Dendritic cell treated with granulocyte-macrophage colony-stimulating factor and Interleukin-4, amounts not matched to agents 40 ng/mL and 50 ng/mL, for 4 days (primary cell): ENCODE measurements at regions of chr10 and their contacts with region 1.

Region 1: DNA sequence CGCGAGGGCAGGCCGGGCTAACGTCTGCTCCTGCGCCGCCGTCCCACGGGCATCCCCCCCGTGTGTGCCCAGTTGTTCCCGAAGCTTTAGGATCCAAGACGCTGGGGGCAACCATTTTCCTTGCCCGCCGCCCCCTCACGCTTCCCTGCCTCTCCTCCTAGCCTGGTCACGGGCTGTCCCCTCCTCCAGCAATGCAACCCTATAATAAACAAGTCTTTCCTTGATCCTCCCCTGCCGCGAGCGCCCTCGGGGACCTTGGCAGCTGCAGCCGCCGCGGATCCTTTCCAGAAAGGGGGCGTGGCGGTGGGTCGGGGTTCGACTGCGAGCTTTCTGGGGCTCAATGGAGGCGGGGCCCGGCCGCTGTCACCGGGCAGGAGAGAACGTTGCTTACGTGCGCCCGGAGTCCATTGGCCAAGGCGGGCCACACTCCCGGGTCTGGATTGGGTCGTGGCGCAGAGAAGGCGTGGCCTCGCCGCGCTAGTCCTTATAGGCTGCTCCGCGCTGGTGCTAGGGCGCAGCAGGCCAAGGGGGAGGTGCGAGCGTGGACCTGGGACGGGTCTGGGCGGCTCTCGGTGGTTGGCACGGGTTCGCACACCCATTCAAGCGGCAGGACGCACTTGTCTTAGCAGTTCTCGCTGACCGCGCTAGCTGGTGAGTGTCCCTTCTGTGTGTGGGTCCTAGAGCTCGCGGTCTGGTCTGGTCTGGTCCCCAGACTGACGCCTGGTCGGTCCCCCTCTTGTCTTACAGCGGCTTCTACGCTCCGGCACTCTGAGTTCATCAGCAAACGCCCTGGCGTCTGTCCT is at the start of gene DDIT4:
- H3K4me3 Mint-ChIP-seq: peak within 1 kb of the TSS; percentile 93
- H3K27ac Mint-ChIP-seq: peak within 1 kb of the TSS; percentile 71
- H3K4me1 Mint-ChIP-seq: peaks cover 57% of the 10 kb centered on the region
- H3K27me3 Mint-ChIP-seq: peaks cover 15% of the 10 kb centered on the region

Region 2: DNA sequence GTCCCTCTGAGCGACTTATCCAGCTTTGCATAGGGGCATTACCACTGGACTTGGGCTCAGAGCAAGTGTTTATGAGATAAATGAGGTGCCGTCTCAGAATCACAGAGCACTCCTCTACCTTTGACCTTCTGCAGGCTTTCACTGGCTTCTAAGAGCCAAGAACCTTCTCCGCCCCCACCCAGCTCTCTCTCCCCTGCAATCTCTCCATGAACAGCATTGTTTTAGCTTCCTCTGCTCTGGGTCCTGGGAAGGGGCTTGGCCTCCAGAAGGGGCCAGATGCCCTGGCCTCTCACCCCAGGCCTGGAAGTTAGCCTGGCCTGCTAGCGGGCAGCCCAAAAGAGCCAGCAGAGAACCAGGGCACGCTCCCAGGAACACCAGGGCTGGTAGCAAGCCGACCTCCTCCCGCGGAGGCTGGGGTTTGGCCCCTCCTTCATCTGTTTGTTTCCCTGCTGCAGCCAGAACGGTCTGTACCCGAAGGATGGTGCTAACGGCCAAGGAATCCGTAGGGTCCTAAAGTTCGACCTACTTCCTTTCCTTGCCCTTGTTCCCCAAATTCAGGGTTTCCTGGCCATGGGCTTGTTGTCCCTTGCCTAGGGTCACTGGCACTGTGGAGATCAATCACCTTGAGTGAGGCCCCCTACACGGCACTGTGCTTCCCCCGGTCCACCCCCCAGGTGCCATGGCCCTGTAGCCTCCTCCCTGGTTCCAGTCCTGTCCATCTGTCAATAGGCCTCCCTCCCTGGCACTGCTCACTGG is 18.6 kb before region 1 on chr10:
- intact Hi-C with region 1: loop called (anchors 2 kb)
- H3K4me3 Mint-ChIP-seq: peak overlapping the region; percentile 63
- H3K27ac Mint-ChIP-seq: no peak overlapping the region
- H3K4me1 Mint-ChIP-seq: peaks cover 42% of the 10 kb centered on the region
- H3K27me3 Mint-ChIP-seq: peaks cover 37% of the 10 kb centered on the region

Region 3: DNA sequence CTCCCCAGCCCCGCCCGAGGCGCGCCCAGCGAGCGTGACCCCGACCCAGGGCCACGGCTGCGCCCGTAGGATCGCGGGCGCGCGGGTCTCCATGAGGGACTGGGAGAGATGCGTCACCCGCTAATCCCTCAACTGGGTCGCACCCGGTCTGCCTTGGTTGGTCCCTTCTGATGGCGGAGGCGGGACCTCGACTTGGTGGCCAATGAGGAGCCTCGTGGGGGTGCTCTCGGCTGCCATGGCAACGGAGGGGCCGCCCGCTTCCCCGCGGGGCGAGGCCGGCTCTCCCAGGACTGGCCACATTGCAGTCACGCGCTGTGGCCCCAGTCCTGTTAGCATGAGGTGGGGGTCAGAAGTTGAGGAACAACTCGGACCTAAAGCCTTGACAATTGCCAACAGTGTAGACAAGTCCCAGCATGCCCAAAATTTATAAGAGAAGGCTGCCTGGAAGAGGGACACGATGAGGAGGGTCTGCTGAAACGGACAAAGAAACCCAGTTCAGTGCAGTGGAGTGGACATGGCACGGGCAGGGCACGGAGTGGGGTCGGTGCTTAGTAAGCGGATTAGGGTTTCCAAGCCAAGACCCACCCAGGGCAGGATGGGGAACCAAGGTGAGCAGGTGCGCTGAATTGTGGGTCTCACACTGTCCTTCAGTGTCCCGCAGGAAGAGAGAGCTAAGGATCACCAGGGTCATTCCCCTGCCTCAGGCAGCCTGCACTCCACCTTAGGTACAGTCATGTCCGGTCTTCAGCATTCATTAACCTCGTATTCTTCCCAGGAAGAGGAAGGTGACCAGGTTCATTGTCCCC is 24.6 kb after region 1 on chr10:
- intact Hi-C with region 1: loop called (anchors 1 kb)
- H3K4me3 Mint-ChIP-seq: peak overlapping the region; percentile 78
- H3K27ac Mint-ChIP-seq: peak overlapping the region; percentile 91
- H3K4me1 Mint-ChIP-seq: peaks cover 44% of the 10 kb centered on the region
- H3K27me3 Mint-ChIP-seq: peaks cover 9% of the 10 kb centered on the region

Region 4: GRCh38 chr10:72319416-72320254 is 46.0 kb after region 1 on chr10:
- intact Hi-C with region 1: no loop called
- H3K4me3 Mint-ChIP-seq: peak overlapping the region; percentile 65
- H3K27ac Mint-ChIP-seq: peak overlapping the region; percentile 80
- H3K4me1 Mint-ChIP-seq: peaks cover 89% of the 10 kb centered on the region
- H3K27me3 Mint-ChIP-seq: peaks cover 10% of the 10 kb centered on the region

Region 5: GRCh38 chr10:72542396-72542815 is 268.8 kb after region 1 on chr10:
- intact Hi-C with region 1: no loop called
- H3K4me3 Mint-ChIP-seq: no peak overlapping the region
- H3K27ac Mint-ChIP-seq: no peak overlapping the region
- H3K4me1 Mint-ChIP-seq: peaks cover 41% of the 10 kb centered on the region
- H3K27me3 Mint-ChIP-seq: no peaks in the 10 kb centered on the region